T-cell (primary cell): ENCODE measurements at regions of chr2 and their contacts with region 1.

Region 1: GRCh38 chr2:152635635-152636298 is 81.5 kb downstream of the PRPF40A start:
- DNase-seq: peak in 33 of 35 experiments; percentile 12 to 73 (median 44)
- ATAC-seq: peak in 3 of 4 experiments; percentile 15 to 69 (median 53)
- H3K4me3 ChIP-seq: no peak overlapping the region
- H3K4me3 Mint-ChIP-seq: no peak overlapping the region
- H3K27ac ChIP-seq: no peak overlapping the region
- H3K27ac Mint-ChIP-seq: no peak overlapping the region
- H3K4me1 ChIP-seq: peaks cover 0 to 5% of the 10 kb centered on the region in 2 experiments
- H3K4me1 Mint-ChIP-seq: peaks cover 2 to 5% (median 5%) of the 10 kb centered on the region in 3 donors
- H3K27me3 ChIP-seq: peaks cover 0 to 8% of the 10 kb centered on the region in 2 experiments
- H3K27me3 Mint-ChIP-seq: no peaks in the 10 kb centered on the region

Region 2: DNA sequence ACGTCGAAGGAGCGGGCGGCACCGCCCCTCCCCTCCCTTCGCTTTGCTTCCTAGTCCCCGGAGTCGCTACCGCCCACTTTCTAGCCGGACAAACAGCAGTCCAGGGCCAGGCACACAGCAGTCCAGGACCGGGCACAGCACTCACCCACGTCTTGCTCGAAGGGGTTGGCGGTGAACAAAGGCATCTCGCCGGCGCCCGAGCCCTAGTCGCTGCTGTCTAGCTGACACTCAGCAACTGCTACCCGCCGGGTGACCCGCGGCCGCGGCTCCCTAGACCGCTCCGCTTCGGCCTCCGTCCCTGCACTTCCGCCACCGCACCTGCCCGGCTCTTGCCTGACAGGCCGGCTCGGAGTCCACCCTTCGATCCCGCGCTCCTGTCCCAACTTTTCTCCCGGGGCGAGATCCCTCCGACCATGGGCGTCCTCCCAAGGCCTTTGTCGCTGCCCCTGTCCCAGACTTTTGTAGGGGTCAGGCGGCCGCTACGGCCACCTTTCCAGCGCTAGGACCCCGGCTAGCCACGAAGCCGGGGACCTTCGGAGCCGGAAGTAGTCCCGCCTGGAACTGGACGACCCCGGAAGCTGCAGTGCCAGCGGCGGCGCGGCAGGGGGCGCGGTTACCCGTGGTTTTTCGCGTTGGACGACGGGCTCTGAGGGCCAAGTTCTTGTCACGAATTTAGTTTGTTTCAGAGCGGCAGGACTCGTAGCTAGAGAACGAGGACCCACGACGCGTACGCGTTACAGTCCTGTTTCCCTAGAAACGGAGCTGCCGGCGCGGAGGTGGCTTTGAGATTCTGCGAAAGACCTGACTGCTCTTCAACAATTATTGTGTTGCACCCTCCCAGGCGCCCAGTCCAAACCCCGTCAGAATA is 460.1 kb before region 1 on chr2 and contains the start of gene STAM2:
- CTCF ChIA-PET with region 1: interaction called, 27 to 30 read pairs
- POLR2A ChIA-PET with region 1: no interaction called
- DNase-seq: peak; percentile 78 to 95 (median 88)
- ATAC-seq: peak; percentile 88 to 93 (median 89)
- H3K4me3 ChIP-seq: peak within 1 kb of the TSS; percentile 81 to 98
- H3K4me3 Mint-ChIP-seq: peak within 1 kb of the TSS; percentile 98 to 99 (median 98)
- H3K27ac ChIP-seq: peak within 1 kb of the TSS; percentile 87
- H3K27ac Mint-ChIP-seq: peak within 1 kb of the TSS; percentile 99 to 100
- H3K4me1 ChIP-seq: peaks cover 8 to 17% of the 10 kb centered on the region in 2 experiments
- H3K4me1 Mint-ChIP-seq: peaks cover 34 to 40% (median 38%) of the 10 kb centered on the region in 3 donors
- H3K27me3 ChIP-seq: no peaks in the 10 kb centered on the region
- H3K27me3 Mint-ChIP-seq: peaks cover 2 to 10% of the 10 kb centered on the region in 2 donors
- total RNA-seq, gene STAM2: 12.0 to 20.8 (median 19.3) TPM

Region 3: GRCh38 chr2:152421521-152422370 is 214.0 kb before region 1 on chr2:
- CTCF ChIA-PET with region 1: no interaction called
- POLR2A ChIA-PET with region 1: no interaction called
- DNase-seq: peak in 1 of 35 experiments; percentile 3
- ATAC-seq: no peak
- H3K4me3 ChIP-seq: no peak overlapping the region
- H3K4me3 Mint-ChIP-seq: no peak overlapping the region
- H3K27ac ChIP-seq: no peak overlapping the region
- H3K27ac Mint-ChIP-seq: no peak overlapping the region
- H3K4me1 ChIP-seq: no peaks in the 10 kb centered on the region
- H3K4me1 Mint-ChIP-seq: no peaks in the 10 kb centered on the region
- H3K27me3 ChIP-seq: peaks cover 0 to 5% of the 10 kb centered on the region in 2 experiments
- H3K27me3 Mint-ChIP-seq: peaks cover 3 to 7% of the 10 kb centered on the region in 2 donors